Heart right ventricle (tissue), 16 donors: ENCODE measurements at regions of chr7 and their contacts with region 1.

Region 1: GRCh38 chr7:143240291-143241168 is 18.7 kb downstream of the TAS2R40 start:
- DNase-seq: peak; percentile 33 to 70
- ATAC-seq: peak; percentile 69 to 94 (median 88)
- H3K4me3 ChIP-seq: peak overlapping the region in 1 of 10 donors; percentile 13
- H3K27ac ChIP-seq: peak overlapping the region in 2 of 10 donors; percentile 5 to 82
- H3K4me1 ChIP-seq: peaks cover 0 to 41% (median 4%) of the 10 kb centered on the region in 9 donors
- H3K27me3 ChIP-seq: no peaks in the 10 kb centered on the region
- CTCF ChIP-seq: peak; percentile 84 to 98 (median 95)

Region 2: GRCh38 chr7:143147072-143147694 is 93.3 kb before region 1 on chr7:
- intact Hi-C with region 1: no loop called
- DNase-seq: no peak
- ATAC-seq: peak in 1 of 8 donors; percentile 35
- H3K4me3 ChIP-seq: no peak overlapping the region
- H3K27ac ChIP-seq: no peak overlapping the region
- H3K4me1 ChIP-seq: no peaks in the 10 kb centered on the region
- H3K27me3 ChIP-seq: no peaks in the 10 kb centered on the region
- CTCF ChIP-seq: no peak

Region 3: DNA sequence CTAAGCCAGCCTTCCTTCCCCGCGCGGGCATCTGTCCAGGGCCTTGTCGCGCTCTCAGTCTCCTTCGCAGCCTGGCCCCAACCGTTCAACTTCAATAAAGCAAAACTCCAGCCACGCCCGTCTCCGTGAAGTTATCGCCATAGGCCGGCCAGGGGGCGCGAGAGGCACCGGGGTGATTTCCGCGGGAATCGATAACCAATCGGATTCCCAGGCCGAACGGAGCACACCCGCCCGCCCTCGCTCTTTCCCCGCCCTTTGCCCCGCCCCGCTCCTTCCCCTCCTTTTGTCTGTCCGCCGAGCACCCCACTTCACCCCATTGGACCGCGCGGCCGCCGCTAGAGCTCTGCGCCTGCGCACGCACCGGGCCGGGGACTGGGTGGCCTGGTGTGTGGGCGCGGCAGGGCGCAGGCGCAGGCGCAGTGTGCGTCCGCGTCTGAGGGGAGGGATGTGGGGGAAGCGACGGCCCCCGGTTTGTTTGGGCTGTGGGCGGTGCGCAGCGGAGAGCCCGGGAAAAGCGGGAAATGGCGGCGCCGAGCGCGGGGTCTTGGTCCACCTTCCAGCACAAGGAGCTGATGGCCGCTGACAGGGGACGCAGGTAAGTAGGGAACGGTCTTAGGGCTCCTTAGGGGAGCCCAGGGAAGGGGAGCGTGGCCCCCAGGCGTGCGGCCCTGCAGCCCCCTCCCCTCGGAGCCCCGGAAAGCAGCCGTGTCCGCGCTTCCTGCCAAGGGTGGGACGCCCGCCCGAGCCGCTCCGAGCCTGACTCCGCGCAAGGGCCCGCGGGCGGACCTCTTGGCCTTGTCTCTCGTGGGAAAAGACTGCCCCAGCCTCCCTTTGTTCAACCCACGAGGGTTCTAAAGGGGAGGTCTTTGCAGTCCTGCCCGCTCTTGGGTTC is 47.7 kb after region 1 on chr7 and contains the start of gene CASP2:
- intact Hi-C with region 1: loop called in 2 of 10 experiments (anchors 5 kb)
- DNase-seq: peak; percentile 98 to 99
- ATAC-seq: peak; percentile 96 to 99 (median 97)
- H3K4me3 ChIP-seq: peak within 1 kb of the TSS; percentile 85 to 100 (median 96)
- H3K27ac ChIP-seq: peak within 1 kb of the TSS; percentile 82 to 99 (median 96)
- H3K4me1 ChIP-seq: peaks cover 0 to 68% (median 41%) of the 10 kb centered on the region in 9 donors
- H3K27me3 ChIP-seq: no peaks in the 10 kb centered on the region
- CTCF ChIP-seq: peak in 7 of 9 donors; percentile 26 to 66 (median 51)
- total RNA-seq, gene CASP2: 7.1 to 13.9 (median 10.2) TPM

Region 4: GRCh38 chr7:143299840-143300239 is 59.3 kb after region 1 on chr7:
- intact Hi-C with region 1: loop called (anchors 1 to 5 kb)
- DNase-seq: peak in 1 of 2 donors; percentile 24
- ATAC-seq: peak in 6 of 8 donors; percentile 42 to 73 (median 64)
- H3K4me3 ChIP-seq: no peak overlapping the region
- H3K27ac ChIP-seq: peak overlapping the region in 8 of 10 donors; percentile 6 to 54 (median 39)
- H3K4me1 ChIP-seq: peaks cover 0 to 52% (median 25%) of the 10 kb centered on the region in 9 donors
- H3K27me3 ChIP-seq: no peaks in the 10 kb centered on the region
- CTCF ChIP-seq: peak; percentile 13 to 66 (median 56)

Region 5: GRCh38 chr7:143305423-143306070 is 65.0 kb after region 1 on chr7:
- intact Hi-C with region 1: loop called (anchors 1 to 5 kb)
- DNase-seq: peak; percentile 74 to 75
- ATAC-seq: peak; percentile 62 to 93 (median 86)
- H3K4me3 ChIP-seq: no peak overlapping the region
- H3K27ac ChIP-seq: no peak overlapping the region
- H3K4me1 ChIP-seq: peaks cover 0 to 35% (median 3%) of the 10 kb centered on the region in 9 donors
- H3K27me3 ChIP-seq: no peaks in the 10 kb centered on the region
- CTCF ChIP-seq: peak; percentile 49 to 88 (median 80)